ENCODE measurements at regions of chr2 and their contacts with region 1.

Region 1: GRCh38 chr2:66434679-66435548 is at the start of gene MEIS1:
- DNase-seq: peak; percentile 94
- H3K4me3 Mint-ChIP-seq: peak within 1 kb of the TSS; percentile 84
- H3K27ac Mint-ChIP-seq: peak within 1 kb of the TSS; percentile 89
- H3K4me1 Mint-ChIP-seq: peaks cover 6% of the 10 kb centered on the region
- H3K27me3 Mint-ChIP-seq: no peaks in the 10 kb centered on the region
- CTCF ChIP-seq: no peak
- total RNA-seq, gene MEIS1: 4.1 and 4.4 TPM in 2 replicates

Region 2: GRCh38 chr2:65638443-65638842 is 796.5 kb before region 1 on chr2:
- CTCF ChIA-PET with region 1: interaction called, 8 read pairs
- POLR2A ChIA-PET with region 1: interaction called, 16 read pairs
- intact Hi-C with region 1: no loop called
- DNase-seq: no peak
- H3K4me3 Mint-ChIP-seq: no peak overlapping the region
- H3K27ac Mint-ChIP-seq: no peak overlapping the region
- H3K4me1 Mint-ChIP-seq: peaks cover 28% of the 10 kb centered on the region
- H3K27me3 Mint-ChIP-seq: no peaks in the 10 kb centered on the region
- CTCF ChIP-seq: no peak

Region 3: GRCh38 chr2:66389651-66390131 is 45.2 kb before region 1 on chr2:
- CTCF ChIA-PET with region 1: no interaction called
- POLR2A ChIA-PET with region 1: interaction called, 15 read pairs
- intact Hi-C with region 1: no loop called
- DNase-seq: peak; percentile 76
- H3K4me3 Mint-ChIP-seq: peak overlapping the region; percentile 70
- H3K27ac Mint-ChIP-seq: peak overlapping the region; percentile 95
- H3K4me1 Mint-ChIP-seq: peaks cover 20% of the 10 kb centered on the region
- H3K27me3 Mint-ChIP-seq: no peaks in the 10 kb centered on the region
- CTCF ChIP-seq: no peak

Region 4: GRCh38 chr2:66445925-66446860 is 11.3 kb after region 1 on chr2:
- CTCF ChIA-PET with region 1: interaction called, 4 read pairs
- POLR2A ChIA-PET with region 1: interaction called, 14 read pairs
- intact Hi-C with region 1: no loop called
- DNase-seq: no peak
- H3K4me3 Mint-ChIP-seq: no peak overlapping the region
- H3K27ac Mint-ChIP-seq: no peak overlapping the region
- H3K4me1 Mint-ChIP-seq: no peaks in the 10 kb centered on the region
- H3K27me3 Mint-ChIP-seq: no peaks in the 10 kb centered on the region
- CTCF ChIP-seq: no peak

Region 5: DNA sequence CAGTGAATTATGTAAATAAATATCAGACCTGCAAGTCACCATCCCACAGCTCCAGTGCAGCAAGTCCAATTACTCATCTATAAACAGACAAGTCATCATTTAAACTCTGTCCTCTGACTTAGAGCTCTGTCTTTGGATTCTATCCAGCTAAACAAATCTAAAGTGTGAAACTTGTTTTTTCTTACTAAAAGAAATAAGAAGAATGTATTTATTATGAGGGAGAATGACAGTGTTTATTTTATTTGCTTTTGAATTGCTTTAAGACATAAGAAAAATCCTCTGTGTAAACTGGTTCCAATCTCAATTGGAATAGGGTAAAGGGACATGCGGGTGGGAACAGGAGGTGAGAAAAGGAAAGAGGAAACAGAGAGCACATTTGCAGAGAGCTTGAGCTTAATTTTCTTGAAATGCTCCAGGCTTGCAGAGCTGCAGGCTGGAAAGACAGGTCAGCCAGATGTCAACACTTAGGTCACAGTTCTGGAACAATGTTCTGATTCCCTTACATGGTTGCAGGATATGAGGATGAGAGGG is 355.8 kb after region 1 on chr2:
- CTCF ChIA-PET with region 1: no interaction called
- POLR2A ChIA-PET with region 1: interaction called, 10 read pairs
- intact Hi-C with region 1: no loop called
- DNase-seq: peak; percentile 40
- H3K4me3 Mint-ChIP-seq: no peak overlapping the region
- H3K27ac Mint-ChIP-seq: peak overlapping the region; percentile 6
- H3K4me1 Mint-ChIP-seq: peaks cover 16% of the 10 kb centered on the region
- H3K27me3 Mint-ChIP-seq: no peaks in the 10 kb centered on the region
- CTCF ChIP-seq: no peak

Region 6: GRCh38 chr2:67215214-67216055 is 780.5 kb after region 1 on chr2:
- CTCF ChIA-PET with region 1: interaction called, 6 read pairs
- POLR2A ChIA-PET with region 1: interaction called, 15 read pairs
- intact Hi-C with region 1: loop called (anchors 1 kb)
- DNase-seq: peak; percentile 76
- H3K4me3 Mint-ChIP-seq: peak overlapping the region; percentile 21
- H3K27ac Mint-ChIP-seq: peak overlapping the region; percentile 32
- H3K4me1 Mint-ChIP-seq: peaks cover 6% of the 10 kb centered on the region
- H3K27me3 Mint-ChIP-seq: no peaks in the 10 kb centered on the region
- CTCF ChIP-seq: peak; percentile 77

Region 7: DNA sequence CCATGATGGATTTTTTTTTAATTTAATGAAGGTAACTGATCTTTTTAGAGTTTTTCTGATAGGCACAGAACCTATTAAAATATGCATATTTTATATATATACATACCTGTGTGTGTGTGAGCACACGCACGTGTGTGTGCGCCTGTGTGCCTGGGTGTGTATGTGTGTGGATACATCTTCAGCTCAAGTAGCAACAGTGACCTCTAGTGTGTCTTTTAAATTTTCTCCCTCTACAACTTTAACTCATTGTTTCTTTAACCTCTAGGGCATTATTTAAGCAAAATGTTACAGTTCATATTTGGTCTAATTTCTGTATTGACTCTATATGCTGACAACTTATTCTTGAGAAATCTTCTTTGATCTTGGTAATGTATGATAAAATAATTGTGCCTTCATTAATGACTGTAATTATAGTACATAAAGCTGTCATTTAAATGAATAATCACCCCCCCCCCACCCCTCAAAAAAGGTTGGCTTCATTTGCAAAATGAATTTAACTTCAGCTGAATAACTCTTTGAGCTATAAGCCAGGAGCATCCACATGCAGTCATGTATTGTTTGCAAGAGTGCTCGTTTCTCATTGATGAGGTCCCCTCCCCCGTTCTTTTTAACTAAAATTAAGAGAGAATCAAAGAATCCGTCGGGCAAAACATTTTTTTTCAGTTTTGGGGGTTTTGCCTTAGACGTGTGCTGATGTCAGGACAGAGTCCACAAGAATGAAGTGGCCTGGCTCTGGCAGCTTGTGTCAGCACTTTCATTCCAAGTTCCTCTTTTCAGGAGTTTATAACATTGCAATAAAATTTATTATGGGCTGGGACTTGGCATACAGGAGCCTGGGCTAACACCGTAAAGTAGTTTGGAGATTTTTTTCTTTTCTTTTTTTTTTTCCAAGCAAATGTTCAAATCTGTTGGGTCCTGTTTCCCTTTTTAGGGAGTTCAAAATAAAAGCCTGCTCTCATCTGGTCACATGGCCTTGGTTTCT is 1042.2 kb after region 1 on chr2:
- CTCF ChIA-PET with region 1: interaction called, 3 read pairs
- POLR2A ChIA-PET with region 1: interaction called, 10 read pairs
- intact Hi-C with region 1: loop called (anchors 5 kb)
- DNase-seq: peak; percentile 56
- H3K4me3 Mint-ChIP-seq: no peak overlapping the region
- H3K27ac Mint-ChIP-seq: peak overlapping the region; percentile 7
- H3K4me1 Mint-ChIP-seq: no peaks in the 10 kb centered on the region
- H3K27me3 Mint-ChIP-seq: no peaks in the 10 kb centered on the region
- CTCF ChIP-seq: peak; percentile 50